Left colon (tissue), 2 donors: ENCODE measurements at regions of chr2 and their contacts with region 1.

Region 1: DNA sequence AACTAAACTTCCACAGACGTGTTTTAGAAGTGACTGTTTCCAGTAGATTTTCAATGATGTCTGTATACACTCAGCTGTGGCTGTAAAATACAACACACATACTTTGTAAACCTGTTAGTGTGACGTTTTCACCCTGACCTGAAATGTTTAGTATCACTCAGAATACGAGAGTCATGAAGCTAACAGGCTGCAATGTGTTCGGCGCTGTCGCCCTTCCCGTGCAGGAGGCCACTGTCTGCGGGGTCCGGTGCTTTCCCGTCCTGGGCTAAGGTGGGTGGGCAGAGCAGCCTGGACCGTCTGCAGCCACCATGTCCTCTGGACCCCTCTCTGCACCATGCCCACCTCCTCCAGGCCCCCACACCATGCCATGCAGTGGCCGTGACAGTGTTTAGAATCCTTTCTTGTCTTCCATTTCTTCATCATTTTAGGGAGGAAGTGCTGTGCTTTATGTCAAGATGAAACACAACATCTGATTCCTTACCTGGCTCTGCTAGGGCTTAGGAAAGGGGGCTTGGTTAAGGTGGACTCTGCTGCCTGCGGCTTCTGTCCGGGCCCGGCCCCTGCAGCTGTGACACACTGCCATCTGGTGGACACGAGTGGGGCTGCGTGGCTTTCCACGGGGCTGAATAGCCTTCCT is 53.8 kb upstream of the RBM44 start:
- DNase-seq: peak in 1 of 2 donors; percentile 81
- ATAC-seq: peak; percentile 67

Region 2: DNA sequence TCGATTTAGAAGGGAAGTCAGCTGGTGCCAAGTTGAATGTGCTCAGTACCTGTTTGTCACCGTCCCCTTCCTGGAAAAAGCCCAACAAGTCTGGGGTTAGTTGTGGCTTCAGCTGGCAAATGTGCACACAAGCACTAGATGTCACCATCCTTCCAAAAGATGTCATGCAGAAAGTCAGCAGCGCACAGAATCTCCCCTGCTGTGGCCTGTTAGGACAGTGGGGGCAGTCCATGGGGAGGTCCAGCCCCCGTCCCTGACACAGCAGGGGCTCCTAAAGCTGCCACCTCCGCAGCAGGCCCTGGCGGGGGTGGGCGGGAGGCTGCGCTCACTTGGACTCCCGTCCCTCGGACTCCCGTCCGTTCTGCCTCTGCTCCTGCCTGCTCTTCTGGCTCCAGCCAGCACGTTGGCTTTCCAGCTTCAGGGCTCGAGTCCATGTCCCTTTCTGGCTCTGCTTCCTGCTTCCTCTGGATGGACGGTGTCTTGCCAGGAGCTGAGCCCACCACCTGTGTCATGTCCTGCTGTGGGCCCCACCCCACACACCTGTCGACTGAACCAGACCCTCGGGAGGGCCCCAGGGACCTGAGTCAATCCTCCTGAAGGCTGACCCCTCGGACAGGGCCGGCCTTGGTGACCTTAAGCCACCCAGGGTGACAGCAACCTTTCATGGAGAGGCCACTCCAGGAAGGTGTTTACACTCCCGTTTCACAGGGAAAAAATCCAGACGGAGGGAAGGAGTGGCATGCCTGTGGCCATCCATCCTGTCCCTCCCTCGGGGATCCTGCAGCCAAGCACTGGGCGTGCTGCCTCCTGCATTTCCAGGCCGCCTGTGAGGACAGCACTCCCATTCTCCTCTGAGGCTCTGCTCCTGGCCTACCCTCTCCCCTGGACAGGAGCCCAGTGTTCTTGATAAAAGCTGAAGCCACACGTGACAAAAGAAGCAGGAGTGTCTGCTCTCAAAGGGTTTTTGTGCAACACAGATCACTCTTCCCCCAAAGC is 162.7 kb before region 1 on chr2:
- intact Hi-C with region 1: loop called in 1 of 2 experiments (anchors 10 kb)
- DNase-seq: peak in 1 of 2 donors; percentile 50
- ATAC-seq: peak; percentile 36

Region 3: GRCh38 chr2:237590272-237591140 is 154.2 kb before region 1 on chr2 and contains the start of gene RAB17:
- intact Hi-C with region 1: loop called (anchors 10 kb)
- DNase-seq: peak; percentile 79 to 91
- ATAC-seq: peak; percentile 90
- total RNA-seq, gene RAB17: 51.3 to 59.2 TPM

Region 4: DNA sequence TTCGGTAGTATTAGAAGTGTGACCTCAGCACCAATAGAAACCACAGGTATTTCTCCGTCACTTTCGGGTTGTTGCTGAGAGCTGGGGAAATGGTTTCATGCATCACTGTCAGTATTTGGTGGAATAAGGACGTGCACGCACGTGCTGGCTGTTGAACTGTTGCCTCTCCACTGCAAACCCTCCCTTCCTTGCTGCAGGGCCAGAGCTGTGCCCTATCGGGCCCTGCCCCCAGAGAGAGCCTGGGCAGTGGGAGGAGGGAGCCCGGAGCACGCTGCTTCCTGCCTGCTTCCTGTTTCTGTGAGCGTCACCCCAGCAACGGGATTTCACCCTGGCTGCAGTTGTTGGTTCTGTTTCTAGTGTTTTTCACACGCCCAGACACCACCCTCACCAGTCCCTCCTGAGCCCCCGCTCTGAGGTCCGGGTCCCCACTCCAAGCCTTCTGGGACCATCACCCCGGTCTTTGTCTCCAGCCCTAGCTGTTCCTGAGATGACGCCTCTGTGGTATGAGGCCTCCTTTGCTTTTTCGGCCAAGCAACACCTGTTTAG is 69.9 kb before region 1 on chr2:
- intact Hi-C with region 1: loop called (anchors 10 kb)
- DNase-seq: peak; percentile 86 to 92
- ATAC-seq: peak; percentile 85